ENCODE measurements at regions of chr11 and their contacts with region 1.

Region 1: GRCh38 chr11:11621573-11622319 is at the start of gene GALNT18:
- DNase-seq: peak; percentile 95
- H3K4me3 Mint-ChIP-seq: peak within 1 kb of the TSS; percentile 90
- H3K27ac Mint-ChIP-seq: peak within 1 kb of the TSS; percentile 51
- H3K4me1 Mint-ChIP-seq: peaks cover 34% of the 10 kb centered on the region
- H3K27me3 Mint-ChIP-seq: no peaks in the 10 kb centered on the region
- CTCF ChIP-seq: peak; percentile 29
- total RNA-seq, gene GALNT18: 9.0 and 14.1 TPM in 2 replicates

Region 2: GRCh38 chr11:11382824-11383532 is 238.8 kb before region 1 on chr11:
- CTCF ChIA-PET with region 1: no interaction called
- POLR2A ChIA-PET with region 1: no interaction called
- intact Hi-C with region 1: loop called (anchors 10 kb)
- DNase-seq: no peak
- H3K4me3 Mint-ChIP-seq: no peak overlapping the region
- H3K27ac Mint-ChIP-seq: no peak overlapping the region
- H3K4me1 Mint-ChIP-seq: no peaks in the 10 kb centered on the region
- H3K27me3 Mint-ChIP-seq: no peaks in the 10 kb centered on the region
- CTCF ChIP-seq: no peak

Region 3: GRCh38 chr11:11569936-11570491 is 51.7 kb before region 1 on chr11:
- CTCF ChIA-PET with region 1: interaction called, 5 read pairs
- POLR2A ChIA-PET with region 1: interaction called, 50 read pairs
- intact Hi-C with region 1: no loop called
- DNase-seq: peak; percentile 69
- H3K4me3 Mint-ChIP-seq: no peak overlapping the region
- H3K27ac Mint-ChIP-seq: no peak overlapping the region
- H3K4me1 Mint-ChIP-seq: peaks cover 34% of the 10 kb centered on the region
- H3K27me3 Mint-ChIP-seq: no peaks in the 10 kb centered on the region
- CTCF ChIP-seq: no peak

Region 4: DNA sequence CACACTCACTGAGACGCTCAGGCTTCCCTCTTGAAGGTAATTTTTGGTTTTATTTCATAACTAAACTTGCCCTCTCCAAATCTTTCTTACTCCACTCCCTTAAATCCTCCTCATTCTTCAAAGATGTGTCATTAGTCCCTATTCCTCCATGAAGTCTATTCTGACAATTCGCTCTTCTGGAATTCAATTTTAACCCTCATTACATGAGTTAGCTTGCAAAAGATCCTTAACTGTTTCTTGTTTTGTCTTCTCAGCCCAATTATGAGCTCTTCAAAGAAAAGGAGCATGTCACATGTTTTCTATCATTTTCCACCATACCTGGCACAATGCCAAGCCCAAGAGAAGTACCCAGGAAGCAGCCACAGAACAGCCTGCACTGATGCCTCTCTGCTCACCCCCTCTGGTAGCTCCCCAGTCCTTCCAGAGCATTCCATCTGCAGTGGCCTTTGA is 12.9 kb before region 1 on chr11:
- CTCF ChIA-PET with region 1: interaction called, 9 read pairs
- POLR2A ChIA-PET with region 1: interaction called, 42 read pairs
- intact Hi-C with region 1: no loop called
- DNase-seq: peak; percentile 47
- H3K4me3 Mint-ChIP-seq: peak overlapping the region; percentile 42
- H3K27ac Mint-ChIP-seq: peak overlapping the region; percentile 72
- H3K4me1 Mint-ChIP-seq: peaks cover 25% of the 10 kb centered on the region
- H3K27me3 Mint-ChIP-seq: no peaks in the 10 kb centered on the region
- CTCF ChIP-seq: no peak

Region 5: DNA sequence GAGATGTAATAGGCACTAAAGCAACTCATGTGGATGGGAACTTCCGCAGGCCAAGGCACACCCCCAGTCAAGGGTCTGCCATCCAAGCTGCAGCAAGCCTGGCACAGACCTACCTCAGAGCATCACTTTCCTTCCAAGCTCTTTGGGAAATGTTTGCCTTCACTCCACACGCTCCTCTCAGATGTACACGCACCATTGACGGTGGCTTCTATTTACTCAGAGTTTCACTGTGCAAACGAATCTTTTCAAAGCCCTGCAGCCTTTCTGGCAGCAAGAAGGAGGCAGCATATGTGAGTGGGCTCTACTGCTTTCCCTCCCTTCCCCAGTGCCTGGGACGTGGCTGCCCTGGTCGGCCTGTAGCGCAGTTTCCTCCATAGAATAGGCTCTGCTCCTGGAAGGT is 159.1 kb after region 1 on chr11:
- CTCF ChIA-PET with region 1: interaction called, 5 read pairs
- POLR2A ChIA-PET with region 1: interaction called, 17 read pairs
- intact Hi-C with region 1: loop called (anchors 2 kb)
- DNase-seq: no peak
- H3K4me3 Mint-ChIP-seq: no peak overlapping the region
- H3K27ac Mint-ChIP-seq: no peak overlapping the region
- H3K4me1 Mint-ChIP-seq: peaks cover 23% of the 10 kb centered on the region
- H3K27me3 Mint-ChIP-seq: no peaks in the 10 kb centered on the region
- CTCF ChIP-seq: no peak

Region 6: GRCh38 chr11:11841723-11842420 is 220.1 kb after region 1 on chr11 and contains the start of gene USP47:
- CTCF ChIA-PET with region 1: no interaction called
- POLR2A ChIA-PET with region 1: interaction called, 11 read pairs
- intact Hi-C with region 1: no loop called
- DNase-seq: peak; percentile 87
- H3K4me3 Mint-ChIP-seq: no peak within 1 kb of the TSS
- H3K27ac Mint-ChIP-seq: no peak within 1 kb of the TSS
- H3K4me1 Mint-ChIP-seq: no peaks in the 10 kb centered on the region
- H3K27me3 Mint-ChIP-seq: no peaks in the 10 kb centered on the region
- CTCF ChIP-seq: peak; percentile 58
- total RNA-seq, gene USP47: 41.6 and 46.1 TPM in 2 replicates